ENCODE measurements at regions of chr20 and their contacts with region 1.

Region 1: GRCh38 chr20:37527638-37528441 is at the start of gene BLCAP:
- DNase-seq: peak; percentile 93 to 97 (median 96)
- ATAC-seq: peak; percentile 89 to 95 (median 92)
- H3K4me3 ChIP-seq: peak within 1 kb of the TSS; percentile 100
- H3K27ac ChIP-seq: peak within 1 kb of the TSS; percentile 99 to 100 (median 100)
- H3K4me1 ChIP-seq: peaks cover 0 to 22% (median 10%) of the 10 kb centered on the region in 4 donors
- H3K27me3 ChIP-seq: no peaks in the 10 kb centered on the region
- CTCF ChIP-seq: no peak
- POLR2A ChIP-seq: peak; percentile 92
- total RNA-seq, gene BLCAP: 32.7 to 75.5 (median 47.8) TPM

Region 2: DNA sequence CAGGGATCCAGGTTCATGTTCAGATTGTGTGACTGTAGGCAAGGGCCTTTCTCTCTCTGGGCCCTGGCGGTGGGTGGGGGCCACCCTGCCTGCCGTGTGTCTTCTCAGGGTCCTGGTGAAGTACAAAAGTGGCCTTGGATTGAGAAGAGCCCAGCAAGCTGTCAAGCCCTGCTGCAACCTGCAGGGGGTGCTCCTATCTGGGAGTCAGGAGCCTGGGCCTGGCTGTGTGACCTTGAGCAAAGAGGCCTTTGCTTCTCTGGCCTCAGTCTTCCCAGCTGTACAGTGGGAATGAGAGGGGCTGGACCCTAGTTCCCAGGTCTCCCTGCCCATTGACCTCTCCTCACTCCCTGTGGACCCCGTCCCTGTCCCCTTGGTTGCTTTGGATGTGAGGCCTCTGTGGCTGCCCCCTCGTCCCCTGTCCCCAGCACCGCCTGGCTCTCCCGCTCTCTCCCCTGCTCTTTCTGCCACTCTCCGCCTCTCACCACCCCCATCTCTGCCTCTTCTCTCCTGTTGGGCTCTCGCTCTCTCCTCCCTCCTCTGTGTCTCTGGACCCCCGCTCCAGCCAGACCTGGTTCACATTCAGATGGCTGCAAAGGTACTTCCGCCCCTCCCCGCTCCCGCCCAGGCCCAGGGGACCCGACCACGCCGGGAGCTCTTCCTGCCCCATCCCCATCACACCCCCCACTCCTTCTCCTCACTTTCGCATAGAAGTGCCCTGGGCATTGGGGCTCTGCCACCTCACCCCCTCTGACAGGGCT is 135.2 kb before region 1 on chr20:
- intact Hi-C with region 1: loop called (anchors 5 to 10 kb)
- DNase-seq: peak; percentile 15 to 49 (median 47)
- ATAC-seq: peak in 2 of 4 donors; percentile 13 to 17
- H3K4me3 ChIP-seq: no peak overlapping the region
- H3K27ac ChIP-seq: no peak overlapping the region
- H3K4me1 ChIP-seq: peaks cover 0 to 12% (median 0%) of the 10 kb centered on the region in 4 donors
- H3K27me3 ChIP-seq: no peaks in the 10 kb centered on the region
- CTCF ChIP-seq: peak; percentile 10 to 37 (median 19)
- POLR2A ChIP-seq: no peak

Region 3: DNA sequence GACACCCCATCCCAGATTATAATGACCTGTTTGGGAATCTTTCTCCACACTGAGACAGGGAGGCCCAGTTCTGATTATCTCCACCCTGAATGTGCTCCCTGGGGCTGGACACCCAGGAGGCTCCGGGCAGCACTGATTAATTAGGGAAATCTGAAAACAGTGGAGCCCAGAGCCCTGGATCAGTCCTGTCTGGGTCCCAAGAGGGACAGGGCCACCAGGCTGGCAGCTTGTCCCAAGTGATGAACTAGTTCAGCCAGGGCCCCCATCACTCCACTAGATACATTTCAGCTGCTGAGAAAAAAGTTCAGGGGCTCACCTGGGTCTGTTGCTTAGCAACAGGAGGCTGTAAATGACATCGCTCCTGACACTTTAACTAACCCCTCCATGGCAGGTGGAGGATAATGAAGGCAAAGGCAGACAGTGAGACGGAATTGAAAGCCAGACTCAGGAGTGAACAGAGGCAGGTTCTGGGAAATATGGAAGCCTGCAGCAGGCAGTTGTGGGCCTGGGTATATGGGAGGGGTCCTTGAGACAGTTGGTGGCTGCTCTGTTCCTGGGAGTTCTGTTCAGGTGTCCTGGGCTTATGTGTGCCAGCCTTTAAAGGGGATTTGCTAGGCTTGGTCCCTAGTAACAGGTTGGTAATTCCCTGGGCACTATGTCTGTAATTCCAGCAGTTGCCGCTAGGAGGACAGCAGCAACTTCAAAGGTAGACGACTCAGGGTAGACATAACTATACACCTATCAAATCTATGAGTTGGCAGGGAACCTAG is 87.7 kb after region 1 on chr20:
- intact Hi-C with region 1: no loop called
- DNase-seq: no peak
- ATAC-seq: peak in 2 of 4 donors; percentile 50 to 80
- H3K4me3 ChIP-seq: no peak overlapping the region
- H3K27ac ChIP-seq: no peak overlapping the region
- H3K4me1 ChIP-seq: no peaks in the 10 kb centered on the region
- H3K27me3 ChIP-seq: no peaks in the 10 kb centered on the region
- CTCF ChIP-seq: peak in 3 of 4 donors; percentile 26 to 44 (median 42)
- POLR2A ChIP-seq: no peak